Activated T-helper 1 cell treated with anti-CD3 and anti-CD28 coated beads, Interleukin-12 subunit alpha, Interleukin-12 subunit beta, Interleukin-2, Interleukin-4 antibody, amounts not matched to agents 30 ng/mL and 10 ng/mL and 1 ng/mL, durations not matched to agents 14 hours and 24 hours and 36 hours (primary cell): ENCODE measurements at regions of chr11 and their contacts with region 1.

Region 1: GRCh38 chr11:22539821-22540256 is 85.8 kb downstream of the FANCF start:
- DNase-seq: no peak
- H3K4me3 Mint-ChIP-seq: no peak overlapping the region
- H3K27ac Mint-ChIP-seq: no peak overlapping the region
- H3K4me1 Mint-ChIP-seq: no peaks in the 10 kb centered on the region
- H3K27me3 Mint-ChIP-seq: no peaks in the 10 kb centered on the region

Region 2: GRCh38 chr11:22106566-22106965 is 433.3 kb before region 1 on chr11:
- intact Hi-C with region 1: no loop called
- DNase-seq: no peak
- H3K4me3 Mint-ChIP-seq: no peak overlapping the region
- H3K27ac Mint-ChIP-seq: no peak overlapping the region
- H3K4me1 Mint-ChIP-seq: no peaks in the 10 kb centered on the region
- H3K27me3 Mint-ChIP-seq: no peaks in the 10 kb centered on the region

Region 3: DNA sequence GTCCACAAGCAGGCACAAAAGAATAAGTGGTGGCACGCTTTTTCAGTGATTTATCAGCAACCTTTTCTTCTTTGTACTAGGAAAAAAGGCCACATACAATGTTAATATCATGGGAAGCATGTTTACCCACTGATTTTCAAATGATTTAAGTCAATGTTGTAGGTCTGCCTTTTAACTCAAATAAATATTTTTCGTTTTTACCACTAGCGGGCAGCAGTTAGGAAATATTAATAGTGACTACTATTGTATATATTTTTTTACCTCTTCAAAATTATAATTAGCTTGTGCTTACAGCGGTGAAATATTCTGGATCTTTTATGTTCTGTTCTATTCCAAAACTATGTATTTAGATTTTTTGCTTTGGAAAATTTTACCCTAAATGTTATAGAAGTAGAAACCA is 208.1 kb before region 1 on chr11:
- intact Hi-C with region 1: loop called (anchors 5 kb)
- DNase-seq: no peak
- H3K4me3 Mint-ChIP-seq: no peak overlapping the region
- H3K27ac Mint-ChIP-seq: no peak overlapping the region
- H3K4me1 Mint-ChIP-seq: no peaks in the 10 kb centered on the region
- H3K27me3 Mint-ChIP-seq: no peaks in the 10 kb centered on the region